GM13976 (cell line): ENCODE measurements at regions of chr11 and their contacts with region 1.

Region 1: GRCh38 chr11:57249384-57250319 is 12.6 kb upstream of the APLNR start:
- DNase-seq: peak; percentile 57
- CTCF ChIP-seq: peak; percentile 87

Region 2: DNA sequence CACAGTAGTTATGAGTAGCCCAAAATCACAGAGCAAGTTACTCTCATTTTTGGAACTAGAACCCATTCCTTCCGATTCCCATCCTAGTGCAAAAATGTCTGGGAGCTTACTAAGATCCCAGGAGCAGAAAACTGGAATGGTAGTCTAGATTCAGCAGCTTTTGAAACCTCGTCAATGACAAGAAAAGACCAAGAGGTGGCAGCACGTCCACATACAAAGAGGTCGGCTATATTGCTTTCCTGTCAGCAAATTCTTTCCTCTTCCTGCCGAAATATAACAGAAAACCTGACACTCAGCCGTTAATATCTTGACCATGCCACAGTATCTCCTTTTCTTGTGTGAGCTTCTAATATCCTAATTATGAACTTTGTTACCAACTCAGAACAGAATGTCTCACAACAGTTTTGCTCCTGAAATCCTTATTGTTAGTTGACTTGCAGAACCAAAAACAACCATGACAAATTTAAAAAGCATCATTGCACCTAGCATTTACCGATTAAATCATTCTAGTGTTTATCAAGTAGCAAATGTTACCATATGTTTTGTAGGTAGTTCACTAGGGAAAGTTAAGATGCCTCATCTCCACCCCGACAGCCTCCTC is 408.3 kb before region 1 on chr11:
- in situ Hi-C with region 1: loop called (anchors 10 kb)
- DNase-seq: peak; percentile 30
- CTCF ChIP-seq: peak; percentile 56

Region 3: GRCh38 chr11:57116654-57117053 is 133.0 kb before region 1 on chr11:
- in situ Hi-C with region 1: loop called (anchors 25 kb)
- DNase-seq: peak; percentile 6
- CTCF ChIP-seq: peak; percentile 29